ENCODE measurements at regions of chr3 and their contacts with region 1.

Region 1: GRCh38 chr3:168249550-168250414 is 154.1 kb upstream of the GOLIM4 start:
- DNase-seq: peak; percentile 63
- ATAC-seq: peak; percentile 82
- H3K4me3 ChIP-seq: peak overlapping the region; percentile 69
- H3K27ac ChIP-seq: peak overlapping the region; percentile 70
- H3K4me1 ChIP-seq: no peaks in the 10 kb centered on the region
- H3K27me3 ChIP-seq: peaks cover 2% of the 10 kb centered on the region; the same call in 1 of the 2 replicates
- CTCF ChIP-seq: peak; percentile 38
- POLR2A ChIP-seq: 0 out of 2 replicates have a peak, but pooled peaks have one; percentile 40
- RAD21 ChIP-seq: peak; percentile 29; the same call in 1 of the 2 replicates

Region 2: DNA sequence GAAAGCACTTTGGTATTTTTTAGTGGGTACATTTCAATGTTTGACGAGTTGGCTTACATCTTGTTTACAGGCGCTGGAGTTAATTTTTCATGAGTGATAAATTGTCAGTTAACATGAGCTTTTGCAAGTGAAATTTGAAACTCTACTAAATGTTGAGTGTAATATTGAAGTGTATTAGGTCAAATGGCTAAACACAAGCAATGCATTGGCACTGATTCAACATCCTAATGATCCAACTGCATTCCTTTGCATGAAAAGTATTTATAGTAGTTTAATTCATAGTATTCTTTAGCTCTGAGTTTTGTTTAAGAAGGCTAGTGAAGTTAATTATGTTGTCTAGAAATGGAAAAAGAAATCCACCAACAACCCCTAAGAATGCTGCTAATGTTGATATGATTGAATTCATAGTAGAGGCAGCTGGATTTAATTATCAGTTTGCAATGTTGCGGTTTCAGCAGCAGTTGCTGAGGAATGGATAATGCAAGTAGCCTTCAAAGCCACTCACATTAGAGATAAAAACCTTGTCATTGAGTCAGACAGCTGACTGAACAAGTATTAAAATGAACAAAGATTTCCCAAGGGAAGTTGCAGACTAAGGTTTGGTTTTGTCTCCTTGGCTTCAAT is 91.5 kb after region 1 on chr3:
- CTCF ChIA-PET with region 1: interaction called, 3 read pairs
- POLR2A ChIA-PET with region 1: no interaction called
- dilution Hi-C with region 1: no loop called
- in situ Hi-C with region 1: no loop called
- intact Hi-C with region 1: loop called (anchors 2 kb)
- DNase-seq: peak; percentile 91
- ATAC-seq: peak; percentile 76
- H3K4me3 ChIP-seq: no peak overlapping the region
- H3K27ac ChIP-seq: no peak overlapping the region
- H3K4me1 ChIP-seq: peaks cover 10% of the 10 kb centered on the region
- H3K27me3 ChIP-seq: no peaks in the 10 kb centered on the region
- CTCF ChIP-seq: no peak
- POLR2A ChIP-seq: no peak
- RAD21 ChIP-seq: no peak

Region 3: GRCh38 chr3:168425936-168426595 is 176.3 kb after region 1 on chr3:
- CTCF ChIA-PET with region 1: no interaction called
- POLR2A ChIA-PET with region 1: no interaction called
- dilution Hi-C with region 1: no loop called
- in situ Hi-C with region 1: no loop called
- intact Hi-C with region 1: loop called (anchors 2 kb)
- DNase-seq: peak; percentile 52
- ATAC-seq: no peak
- H3K4me3 ChIP-seq: no peak overlapping the region
- H3K27ac ChIP-seq: no peak overlapping the region
- H3K4me1 ChIP-seq: peaks cover 8% of the 10 kb centered on the region
- H3K27me3 ChIP-seq: peaks cover 2% of the 10 kb centered on the region
- CTCF ChIP-seq: no peak
- POLR2A ChIP-seq: no peak
- RAD21 ChIP-seq: no peak

Region 4: GRCh38 chr3:168467115-168467714 is 217.4 kb after region 1 on chr3:
- CTCF ChIA-PET with region 1: no interaction called
- POLR2A ChIA-PET with region 1: no interaction called
- dilution Hi-C with region 1: no loop called
- in situ Hi-C with region 1: no loop called
- intact Hi-C with region 1: loop called (anchors 1 kb)
- DNase-seq: peak; percentile 55
- ATAC-seq: peak; percentile 90
- H3K4me3 ChIP-seq: no peak overlapping the region
- H3K27ac ChIP-seq: no peak overlapping the region
- H3K4me1 ChIP-seq: no peaks in the 10 kb centered on the region
- H3K27me3 ChIP-seq: no peaks in the 10 kb centered on the region
- CTCF ChIP-seq: peak; percentile 60
- POLR2A ChIP-seq: no peak
- RAD21 ChIP-seq: peak; percentile 73

Region 5: GRCh38 chr3:169478566-169479313 is 1229.0 kb after region 1 on chr3:
- CTCF ChIA-PET with region 1: no interaction called
- POLR2A ChIA-PET with region 1: interaction called, 32 read pairs
- dilution Hi-C with region 1: no loop called
- in situ Hi-C with region 1: no loop called
- intact Hi-C with region 1: no loop called
- DNase-seq: peak; percentile 14
- ATAC-seq: no peak
- H3K4me3 ChIP-seq: no peak overlapping the region
- H3K27ac ChIP-seq: no peak overlapping the region
- H3K4me1 ChIP-seq: no peaks in the 10 kb centered on the region
- H3K27me3 ChIP-seq: no peaks in the 10 kb centered on the region
- CTCF ChIP-seq: no peak
- POLR2A ChIP-seq: no peak
- RAD21 ChIP-seq: no peak